ENCODE measurements at regions of chr20 and their contacts with region 1.

Region 1: DNA sequence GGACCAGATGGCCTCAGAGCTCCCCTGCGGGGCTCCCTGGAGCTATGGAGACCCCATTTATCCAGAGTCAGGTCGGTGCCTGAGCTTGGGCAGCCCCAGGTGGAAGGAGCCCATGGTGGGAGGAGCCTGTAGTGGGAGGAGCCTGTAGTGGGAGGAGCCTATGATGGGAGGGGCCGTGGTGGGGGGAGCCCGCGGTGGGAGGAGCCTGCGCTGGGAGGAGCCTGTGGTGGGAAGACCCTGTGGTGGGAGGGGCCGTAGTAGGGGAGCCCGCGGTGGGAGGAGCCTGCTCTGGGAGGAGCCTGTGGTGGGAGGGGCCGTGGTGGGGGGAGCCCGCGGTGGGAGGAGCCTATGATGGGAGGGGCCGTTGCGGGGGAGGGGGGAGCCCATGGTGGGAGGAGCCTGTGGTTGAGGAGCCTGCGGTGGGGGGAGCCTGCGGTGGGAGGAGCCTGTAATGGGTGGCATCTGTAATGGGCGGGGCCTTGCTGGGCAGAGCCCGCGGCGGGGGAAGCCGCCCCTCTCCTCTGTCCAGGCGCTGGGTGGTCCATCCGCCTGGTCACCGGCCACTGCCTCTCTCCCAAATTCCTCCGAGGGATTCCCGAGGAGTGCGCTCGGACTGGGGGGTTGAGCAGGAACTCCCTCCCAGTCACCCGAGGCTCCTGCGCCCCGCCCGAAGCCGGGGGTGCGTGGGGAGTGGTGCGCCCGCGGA is 579 bp upstream of the FNDC11 start:
- DNase-seq: peak; percentile 97
- H3K4me3 Mint-ChIP-seq: peak overlapping the region; percentile 77
- H3K27ac Mint-ChIP-seq: peak overlapping the region; percentile 76
- H3K4me1 Mint-ChIP-seq: peaks cover 12% of the 10 kb centered on the region
- H3K27me3 Mint-ChIP-seq: peaks cover 15% of the 10 kb centered on the region

Region 2: DNA sequence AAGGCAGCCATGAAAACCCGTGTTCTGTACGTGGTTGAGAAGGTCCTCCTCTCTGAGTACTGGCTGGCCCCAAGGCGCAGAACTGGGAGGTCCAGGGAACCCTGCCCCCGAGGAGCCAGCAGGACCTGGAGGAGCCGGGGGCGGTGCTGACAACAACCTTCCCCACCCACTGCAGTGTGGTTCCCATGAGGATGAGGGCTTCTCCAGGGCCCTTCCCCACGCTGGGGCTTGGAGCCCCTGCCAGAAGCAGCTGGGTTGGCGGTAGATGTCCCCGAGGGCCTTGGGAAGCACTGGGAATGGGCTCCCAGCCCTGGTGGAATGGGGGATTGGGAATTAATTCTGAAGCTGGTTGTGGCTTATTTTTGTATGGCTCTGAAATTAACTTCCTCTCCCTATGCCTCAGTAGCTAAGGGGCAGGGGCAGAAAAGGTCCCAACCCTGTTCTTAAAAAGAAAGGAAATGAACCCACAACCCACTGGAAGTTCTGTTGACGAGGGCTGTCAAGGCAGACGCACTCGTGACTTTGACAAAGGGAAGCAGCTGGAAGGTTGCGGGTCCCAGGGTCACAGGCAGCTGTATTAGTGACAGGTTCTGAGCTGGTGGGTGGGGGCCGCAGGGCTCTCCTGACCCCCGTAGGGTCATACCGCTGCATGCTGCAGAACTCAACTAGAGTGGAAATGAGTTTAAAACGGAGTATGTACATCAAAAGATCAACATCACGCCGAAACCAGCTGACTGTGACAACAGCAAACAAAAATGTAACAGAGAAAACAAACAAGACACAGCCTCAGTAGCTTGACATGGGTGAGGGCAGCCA is 34.6 kb after region 1 on chr20:
- intact Hi-C with region 1: no loop called
- DNase-seq: no peak
- H3K4me3 Mint-ChIP-seq: no peak overlapping the region
- H3K27ac Mint-ChIP-seq: no peak overlapping the region
- H3K4me1 Mint-ChIP-seq: peaks cover 4% of the 10 kb centered on the region
- H3K27me3 Mint-ChIP-seq: peaks cover 3% of the 10 kb centered on the region

Region 3: DNA sequence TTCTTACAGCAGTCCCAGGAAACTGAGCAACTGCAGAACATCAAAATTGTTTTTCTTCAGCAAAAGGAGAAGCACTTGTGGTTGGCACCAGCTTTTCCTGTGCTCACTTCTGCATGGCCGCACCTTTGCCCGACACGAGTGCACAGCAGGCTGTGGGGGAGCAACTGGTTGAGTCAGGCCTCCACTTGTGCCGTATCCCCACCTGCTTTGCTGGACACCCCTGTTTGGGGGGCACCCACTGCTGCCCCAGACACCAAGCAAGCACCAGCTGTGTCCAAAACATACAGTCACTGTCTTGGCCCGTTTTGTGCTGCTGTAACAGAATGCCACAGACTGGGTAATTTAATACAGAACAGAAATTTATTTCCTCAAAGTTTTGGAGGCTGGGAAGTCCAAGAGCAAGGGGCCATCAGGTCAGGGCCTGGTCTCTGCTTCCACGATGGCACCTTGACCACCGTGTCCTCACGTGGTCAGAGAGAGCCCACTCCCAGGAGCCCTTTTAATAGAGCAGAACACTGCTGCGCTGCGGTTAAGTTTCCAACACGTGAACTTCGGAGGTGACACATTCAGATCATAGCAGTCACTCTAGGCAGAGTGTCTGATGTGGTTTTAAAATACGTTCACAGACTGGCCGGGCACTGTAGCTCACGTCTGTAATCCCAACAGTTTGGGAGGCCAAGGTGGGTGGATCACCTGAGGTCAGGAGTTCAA is 82.2 kb after region 1 on chr20:
- intact Hi-C with region 1: loop called (anchors 1 kb)
- DNase-seq: peak; percentile 92
- H3K4me3 Mint-ChIP-seq: peak overlapping the region; percentile 68
- H3K27ac Mint-ChIP-seq: peak overlapping the region; percentile 92
- H3K4me1 Mint-ChIP-seq: peaks cover 44% of the 10 kb centered on the region
- H3K27me3 Mint-ChIP-seq: no peaks in the 10 kb centered on the region

Measured in activated CD4-positive, alpha-beta T cell treated with anti-CD3 and anti-CD28 coated beads, Interleukin-2, amount 10 ng/mL, durations not matched to agents 24 days and 14 days (primary cell).